ENCODE measurements at regions of chr5 and their contacts with region 1.

Region 1: GRCh38 chr5:171418316-171418981 is 998 bp upstream of the FGF18 start:
- DNase-seq: peak; percentile 84
- ATAC-seq: peak; percentile 83 to 84

Region 2: GRCh38 chr5:171067540-171068130 is 350.8 kb before region 1 on chr5:
- intact Hi-C with region 1: no loop called
- DNase-seq: no peak
- ATAC-seq: no peak

Region 3: GRCh38 chr5:171093598-171093997 is 324.9 kb before region 1 on chr5:
- intact Hi-C with region 1: no loop called
- DNase-seq: no peak
- ATAC-seq: no peak

Region 4: DNA sequence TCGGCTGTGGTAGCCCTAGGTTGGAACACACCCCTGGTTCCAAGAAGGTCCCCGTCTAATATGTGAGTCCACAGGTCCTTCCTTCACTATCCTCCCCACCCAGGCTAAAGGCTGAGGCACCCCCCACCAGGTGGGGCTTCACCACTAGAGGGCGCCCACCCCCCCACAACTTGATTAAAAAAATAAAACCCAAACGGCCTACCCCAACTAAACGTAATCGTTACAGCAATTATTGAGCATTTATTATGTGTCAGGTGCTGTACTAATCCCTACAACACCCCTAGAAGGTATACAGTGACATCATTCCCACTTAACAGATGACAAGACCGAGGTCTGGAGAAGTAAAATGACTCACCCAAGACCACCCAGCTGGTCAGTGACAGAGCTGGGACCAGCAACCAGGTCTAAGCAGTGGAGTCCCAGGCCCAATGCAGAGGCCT is 66.0 kb after region 1 on chr5:
- intact Hi-C with region 1: no loop called
- DNase-seq: peak; percentile 45
- ATAC-seq: peak; percentile 28 to 45

Region 5: GRCh38 chr5:171630027-171630669 is 211.7 kb after region 1 on chr5:
- intact Hi-C with region 1: loop called in 1 of 2 experiments (anchors 10 kb)
- DNase-seq: peak; percentile 79
- ATAC-seq: peak; percentile 92 to 97

Region 6: DNA sequence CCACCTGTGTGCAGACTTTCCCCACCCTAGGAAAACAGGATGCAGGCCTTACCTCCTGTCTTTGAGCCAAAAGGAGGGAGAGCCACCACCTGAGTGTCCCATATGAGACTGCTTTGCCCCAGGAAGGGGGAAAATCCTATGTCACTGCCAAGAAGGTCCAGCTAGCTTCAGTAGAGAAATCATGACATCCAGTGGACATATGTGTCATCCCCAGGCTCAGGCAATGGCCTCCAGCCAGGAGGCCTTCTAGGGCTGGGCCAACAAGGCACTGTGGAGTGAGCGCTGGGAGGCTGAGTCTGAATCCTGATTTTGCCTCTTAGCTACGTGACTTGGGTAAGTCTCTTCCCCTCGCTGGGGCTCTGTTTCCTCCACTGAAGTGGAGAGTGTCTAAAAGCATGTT is 427.4 kb after region 1 on chr5:
- intact Hi-C with region 1: loop called (anchors 5 to 10 kb)
- DNase-seq: peak; percentile 59
- ATAC-seq: peak; percentile 53 to 71

Region 7: GRCh38 chr5:171907725-171908343 is 489.4 kb after region 1 on chr5:
- intact Hi-C with region 1: loop called (anchors 5 kb)
- DNase-seq: peak; percentile 40
- ATAC-seq: peak; percentile 80

Region 8: GRCh38 chr5:171913987-171914273 is 495.5 kb after region 1 on chr5:
- intact Hi-C with region 1: loop called (anchors 5 kb)
- DNase-seq: no peak
- ATAC-seq: no peak

Region 9: DNA sequence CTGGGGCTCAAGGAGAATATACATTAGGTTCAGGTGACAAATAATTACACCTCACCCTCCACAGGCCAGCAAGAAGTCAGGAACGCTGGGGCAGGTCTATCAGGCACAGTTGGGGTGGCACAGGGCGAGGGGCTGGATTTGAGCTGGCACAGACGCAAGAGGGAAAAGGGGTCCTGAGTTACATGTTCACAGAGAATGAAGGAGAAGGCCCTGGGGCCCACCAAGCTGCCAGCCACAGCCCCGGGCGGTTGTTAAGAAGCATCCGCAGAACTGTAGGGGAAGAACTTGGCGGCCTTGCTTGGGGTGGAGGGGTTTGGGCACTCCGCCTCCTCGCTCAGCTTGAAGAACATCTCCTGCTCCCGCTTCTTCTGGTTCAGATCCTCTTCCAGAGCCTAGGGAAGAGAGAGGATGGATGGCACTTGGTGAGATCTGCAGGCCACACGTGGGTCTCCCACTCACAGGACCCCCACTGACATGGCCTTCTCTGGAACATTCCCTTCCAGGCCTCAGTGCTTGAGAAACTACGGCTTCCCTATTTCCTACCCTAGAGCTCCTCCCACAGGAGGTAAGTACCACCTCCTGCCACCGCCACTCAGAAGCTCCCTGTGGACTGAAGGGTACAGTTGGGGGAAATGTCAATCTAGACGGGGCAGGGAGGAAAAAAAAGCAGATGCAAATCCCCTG is 626.3 kb after region 1 on chr5:
- intact Hi-C with region 1: loop called in 1 of 2 experiments (anchors 10 kb)
- DNase-seq: no peak
- ATAC-seq: no peak